PC-9 (cell line): ENCODE measurements at regions of chr10 and their contacts with region 1.

Region 1: GRCh38 chr10:93827056-93827804 is 66.5 kb upstream of the SLC35G1 start:
- DNase-seq: no peak
- H3K4me3 ChIP-seq: no peak overlapping the region
- H3K27ac ChIP-seq: no peak overlapping the region
- H3K4me1 ChIP-seq: no peaks in the 10 kb centered on the region
- H3K27me3 ChIP-seq: no peaks in the 10 kb centered on the region
- CTCF ChIP-seq: no peak

Region 2: GRCh38 chr10:94487575-94487974 is 660.3 kb after region 1 on chr10:
- CTCF ChIA-PET with region 1: interaction called, 20 read pairs
- POLR2A ChIA-PET with region 1: no interaction called
- intact Hi-C with region 1: no loop called
- DNase-seq: no peak
- H3K4me3 ChIP-seq: no peak overlapping the region
- H3K27ac ChIP-seq: no peak overlapping the region
- H3K4me1 ChIP-seq: no peaks in the 10 kb centered on the region
- H3K27me3 ChIP-seq: no peaks in the 10 kb centered on the region
- CTCF ChIP-seq: no peak